Aorta (tissue), 5 donors: ENCODE measurements at regions of chr17 and their contacts with region 1.

Region 1: GRCh38 chr17:38557836-38558727 is 47.7 kb downstream of the SRCIN1 start:
- DNase-seq: peak; percentile 94 to 98
- ATAC-seq: peak; percentile 94
- H3K4me3 ChIP-seq: no peak overlapping the region
- H3K27ac ChIP-seq: no peak overlapping the region
- H3K4me1 ChIP-seq: no peaks in the 10 kb centered on the region
- H3K27me3 ChIP-seq: peaks cover 0 to 2% of the 10 kb centered on the region in 2 donors

Region 2: DNA sequence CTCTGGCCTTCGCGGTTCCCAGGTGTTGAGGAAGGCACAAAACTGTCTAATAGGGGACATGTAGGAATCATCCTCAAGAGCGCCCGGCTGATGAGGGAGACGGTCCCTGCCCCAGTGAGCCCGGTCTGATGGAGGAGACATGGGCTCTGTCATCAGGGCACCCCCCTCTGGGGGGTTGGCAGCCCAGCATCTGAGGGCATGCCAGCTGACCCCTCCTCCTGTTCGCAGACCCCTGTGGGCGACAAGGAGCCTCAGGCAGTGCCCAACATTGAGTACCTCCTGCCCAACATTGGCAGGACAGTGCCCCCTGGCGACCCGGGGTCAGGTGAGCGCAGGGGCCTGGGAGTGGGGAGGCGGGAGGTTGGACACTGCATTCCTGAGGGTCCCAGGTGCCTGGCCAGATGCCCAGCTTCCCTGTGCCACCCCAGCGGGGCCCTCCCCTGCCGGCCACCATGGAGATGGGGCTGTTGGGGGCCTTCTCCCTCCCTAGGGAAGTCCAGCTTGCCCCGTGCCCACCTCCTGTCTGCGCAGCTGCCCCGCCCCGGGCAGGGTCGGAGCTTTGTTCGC is 59.8 kb before region 1 on chr17:
- intact Hi-C with region 1: no loop called
- DNase-seq: no peak
- ATAC-seq: no peak
- H3K4me3 ChIP-seq: no peak overlapping the region
- H3K27ac ChIP-seq: no peak overlapping the region
- H3K4me1 ChIP-seq: no peaks in the 10 kb centered on the region
- H3K27me3 ChIP-seq: no peaks in the 10 kb centered on the region

Region 3: DNA sequence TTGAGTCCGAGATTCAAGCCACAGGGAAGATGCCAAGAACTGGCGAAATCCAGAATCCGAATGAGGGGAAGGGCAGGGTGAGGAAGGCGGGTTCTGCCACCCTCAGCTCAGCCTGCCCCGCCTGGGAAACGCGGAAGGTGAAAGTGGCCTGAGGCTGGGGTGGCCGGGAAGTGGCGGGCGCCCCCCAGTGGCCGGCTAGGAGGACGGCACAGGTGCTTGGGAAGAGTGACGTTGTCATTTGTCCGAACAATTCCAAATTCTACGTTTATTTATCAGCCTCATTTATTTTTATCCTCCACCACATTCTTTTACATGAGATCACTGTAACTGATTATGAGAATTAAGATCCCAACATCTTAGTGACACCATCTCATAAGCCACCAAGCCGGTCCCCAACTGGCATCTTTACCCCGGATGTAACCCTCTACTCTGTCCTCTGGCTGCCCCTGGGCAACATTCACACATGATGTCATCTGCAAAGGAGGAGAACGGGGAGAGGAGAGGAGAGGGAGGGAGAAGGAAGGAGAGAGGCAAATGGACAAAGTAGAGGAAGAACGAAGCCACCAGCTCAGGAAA is 26.4 kb after region 1 on chr17:
- intact Hi-C with region 1: loop called in 1 of 2 experiments (anchors 1 kb)
- DNase-seq: peak; percentile 73 to 90
- ATAC-seq: peak; percentile 87
- H3K4me3 ChIP-seq: no peak overlapping the region
- H3K27ac ChIP-seq: no peak overlapping the region
- H3K4me1 ChIP-seq: no peaks in the 10 kb centered on the region
- H3K27me3 ChIP-seq: no peaks in the 10 kb centered on the region

Region 4: GRCh38 chr17:38667099-38667786 is 109.2 kb after region 1 on chr17:
- intact Hi-C with region 1: loop called (anchors 5 kb)
- DNase-seq: peak in 1 of 2 donors; percentile 74
- ATAC-seq: peak; percentile 82
- H3K4me3 ChIP-seq: no peak overlapping the region
- H3K27ac ChIP-seq: no peak overlapping the region
- H3K4me1 ChIP-seq: no peaks in the 10 kb centered on the region
- H3K27me3 ChIP-seq: no peaks in the 10 kb centered on the region

Region 5: DNA sequence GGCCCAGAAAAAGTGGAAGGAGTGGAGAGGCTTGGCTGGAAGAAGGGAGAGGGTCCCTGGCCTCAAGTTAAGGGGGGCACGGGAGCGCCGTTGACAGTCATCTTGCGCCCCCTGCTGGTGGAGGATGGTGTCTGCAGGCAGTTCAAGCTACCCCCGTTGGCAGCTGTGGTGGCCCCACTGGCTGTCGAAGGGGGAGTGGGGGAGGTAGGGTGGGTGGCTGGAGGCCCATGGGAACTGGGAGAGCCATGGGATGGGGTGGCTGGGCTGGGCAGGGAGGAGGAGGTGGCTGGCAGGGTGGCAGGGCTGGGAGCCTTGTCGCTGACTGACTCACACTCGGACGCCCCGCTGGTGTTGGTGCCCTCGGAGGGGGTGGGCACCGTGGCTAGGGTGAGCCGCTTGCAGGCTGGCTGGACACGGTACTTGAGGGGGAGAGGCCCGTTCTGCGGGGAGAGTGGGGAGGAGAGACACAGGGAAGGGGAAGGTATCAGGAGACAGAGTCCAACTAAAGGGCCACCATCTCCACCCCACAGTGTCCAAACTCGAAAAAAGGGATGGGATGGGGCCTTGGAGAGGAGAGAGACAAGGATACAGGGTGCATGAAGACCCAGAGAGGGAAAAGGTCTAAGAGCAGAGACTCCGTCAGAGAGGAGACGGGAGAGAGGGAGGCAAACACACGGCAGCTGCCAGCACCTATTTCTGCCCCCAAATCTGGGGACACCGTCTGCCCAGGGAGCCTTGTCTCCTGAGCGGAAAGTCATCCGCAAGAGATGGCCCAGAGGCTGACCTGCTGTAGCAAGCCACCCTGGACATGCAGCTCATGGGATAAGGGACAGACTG is 177.3 kb after region 1 on chr17:
- intact Hi-C with region 1: no loop called
- DNase-seq: peak; percentile 72 to 92
- ATAC-seq: peak; percentile 56
- H3K4me3 ChIP-seq: no peak overlapping the region
- H3K27ac ChIP-seq: no peak overlapping the region
- H3K4me1 ChIP-seq: no peaks in the 10 kb centered on the region
- H3K27me3 ChIP-seq: no peaks in the 10 kb centered on the region